ENCODE measurements at regions of chr2 and their contacts with region 1.

Region 1: GRCh38 chr2:147560810-147561535 is 283.9 kb upstream of the ACVR2A start:
- DNase-seq: no peak
- H3K4me3 ChIP-seq: no peak overlapping the region
- H3K27ac ChIP-seq: no peak overlapping the region
- H3K4me1 ChIP-seq: peaks cover 5% of the 10 kb centered on the region
- H3K27me3 ChIP-seq: no peaks in the 10 kb centered on the region
- CTCF ChIP-seq: no peak

Region 2: DNA sequence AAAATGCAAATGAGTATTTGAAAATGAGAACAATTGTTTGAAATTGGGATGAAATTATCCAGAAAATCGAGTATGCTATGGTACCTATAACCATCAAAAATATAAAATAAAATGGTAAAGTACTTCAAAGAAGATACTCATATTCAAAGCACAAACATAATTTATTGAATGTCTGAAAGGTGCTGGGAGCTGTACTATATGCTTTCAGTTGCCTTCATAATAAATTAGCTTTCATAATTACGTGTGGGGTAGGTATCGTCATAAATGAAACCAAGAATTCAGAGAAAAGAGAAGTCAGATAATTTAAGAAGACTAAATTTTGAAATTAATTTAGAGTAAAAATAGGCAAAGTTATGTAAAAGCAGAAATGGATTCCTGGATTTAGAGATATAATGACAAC is 438.0 kb before region 1 on chr2:
- intact Hi-C with region 1: no loop called
- DNase-seq: no peak
- H3K4me3 ChIP-seq: no peak overlapping the region
- H3K27ac ChIP-seq: no peak overlapping the region
- H3K4me1 ChIP-seq: no peaks in the 10 kb centered on the region
- H3K27me3 ChIP-seq: no peaks in the 10 kb centered on the region
- CTCF ChIP-seq: no peak

Region 3: GRCh38 chr2:147305496-147305895 is 255.5 kb before region 1 on chr2:
- intact Hi-C with region 1: loop called (anchors 5 kb)
- DNase-seq: no peak
- H3K4me3 ChIP-seq: no peak overlapping the region
- H3K27ac ChIP-seq: no peak overlapping the region
- H3K4me1 ChIP-seq: no peaks in the 10 kb centered on the region
- H3K27me3 ChIP-seq: no peaks in the 10 kb centered on the region
- CTCF ChIP-seq: no peak

Region 4: DNA sequence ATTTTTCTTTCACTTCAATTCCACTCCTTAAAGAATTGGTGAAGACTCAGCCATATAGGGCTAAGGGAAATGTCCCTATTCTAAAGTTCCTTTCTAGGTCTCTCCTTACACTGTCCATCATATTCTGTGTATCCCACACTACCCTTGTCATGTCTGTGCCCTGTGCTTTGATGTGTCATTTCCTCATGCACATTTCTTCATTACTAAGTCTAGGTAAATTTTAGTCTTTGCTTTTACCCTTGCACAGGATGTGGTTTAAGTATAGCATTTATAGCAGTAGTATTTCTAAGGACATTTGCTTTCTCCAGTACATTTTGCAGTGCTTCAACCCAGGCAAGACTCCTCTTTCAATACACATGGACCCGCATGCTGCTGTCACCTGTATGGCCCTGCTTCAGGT is 62.4 kb after region 1 on chr2:
- intact Hi-C with region 1: no loop called
- DNase-seq: no peak
- H3K4me3 ChIP-seq: no peak overlapping the region
- H3K27ac ChIP-seq: no peak overlapping the region
- H3K4me1 ChIP-seq: no peaks in the 10 kb centered on the region
- H3K27me3 ChIP-seq: no peaks in the 10 kb centered on the region
- CTCF ChIP-seq: no peak

Region 5: GRCh38 chr2:147989809-147990403 is 428.9 kb after region 1 on chr2:
- intact Hi-C with region 1: no loop called
- DNase-seq: no peak
- H3K4me3 ChIP-seq: no peak overlapping the region
- H3K27ac ChIP-seq: no peak overlapping the region
- H3K4me1 ChIP-seq: peaks cover 11% of the 10 kb centered on the region
- H3K27me3 ChIP-seq: no peaks in the 10 kb centered on the region
- CTCF ChIP-seq: peak; percentile 66

Measured in left ventricle myocardium inferior (tissue), 1 donor.